ENCODE measurements at regions of chr5 and their contacts with region 1.

Region 1: GRCh38 chr5:88729084-88729828 is 153.7 kb downstream of the MEF2C start:
- H3K4me3 ChIP-seq: no peak overlapping the region
- H3K27ac ChIP-seq: no peak overlapping the region
- H3K4me1 ChIP-seq: no peaks in the 10 kb centered on the region
- CTCF ChIP-seq: peak; percentile 43; the same call in 1 of the 2 replicates

Region 2: GRCh38 chr5:87780831-87781760 is 948.2 kb before region 1 on chr5:
- CTCF ChIA-PET with region 1: interaction called, 17 read pairs
- POLR2A ChIA-PET with region 1: no interaction called
- H3K4me3 ChIP-seq: no peak overlapping the region
- H3K27ac ChIP-seq: no peak overlapping the region
- H3K4me1 ChIP-seq: no peaks in the 10 kb centered on the region
- CTCF ChIP-seq: peak; percentile 78

Region 3: DNA sequence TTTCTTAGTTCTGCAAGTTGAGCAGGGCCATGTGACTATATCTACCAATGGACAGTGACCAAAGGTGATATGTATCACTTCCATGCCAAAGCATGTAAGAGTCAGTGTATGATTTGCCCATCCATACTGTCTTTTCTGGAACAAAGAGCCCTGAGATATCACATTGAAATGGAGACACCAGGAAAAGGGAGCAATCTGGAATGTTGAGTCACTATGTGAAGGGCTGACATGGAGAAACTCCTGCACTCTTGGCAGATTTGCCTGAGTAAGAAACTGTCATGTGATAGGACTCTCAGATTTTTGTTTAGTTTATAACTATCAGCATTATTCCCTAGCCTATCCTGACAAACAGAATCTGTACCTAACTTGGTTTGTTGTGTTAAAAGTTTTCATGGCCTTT is 430.8 kb before region 1 on chr5:
- CTCF ChIA-PET with region 1: no interaction called
- POLR2A ChIA-PET with region 1: no interaction called
- H3K4me3 ChIP-seq: no peak overlapping the region
- H3K27ac ChIP-seq: no peak overlapping the region
- H3K4me1 ChIP-seq: no peaks in the 10 kb centered on the region
- CTCF ChIP-seq: no peak

Region 4: GRCh38 chr5:88741964-88742363 is 12.7 kb after region 1 on chr5:
- CTCF ChIA-PET with region 1: interaction called, 35 read pairs
- POLR2A ChIA-PET with region 1: no interaction called
- H3K4me3 ChIP-seq: no peak overlapping the region
- H3K27ac ChIP-seq: no peak overlapping the region
- H3K4me1 ChIP-seq: peaks cover 8% of the 10 kb centered on the region; the same call in 1 of the 2 replicates
- CTCF ChIP-seq: no peak

Region 5: GRCh38 chr5:88819301-88819999 is 90.2 kb after region 1 on chr5:
- CTCF ChIA-PET with region 1: interaction called, 18 read pairs
- POLR2A ChIA-PET with region 1: no interaction called
- H3K4me3 ChIP-seq: no peak overlapping the region
- H3K27ac ChIP-seq: no peak overlapping the region
- H3K4me1 ChIP-seq: peaks cover 4% of the 10 kb centered on the region
- CTCF ChIP-seq: no peak

Region 6: DNA sequence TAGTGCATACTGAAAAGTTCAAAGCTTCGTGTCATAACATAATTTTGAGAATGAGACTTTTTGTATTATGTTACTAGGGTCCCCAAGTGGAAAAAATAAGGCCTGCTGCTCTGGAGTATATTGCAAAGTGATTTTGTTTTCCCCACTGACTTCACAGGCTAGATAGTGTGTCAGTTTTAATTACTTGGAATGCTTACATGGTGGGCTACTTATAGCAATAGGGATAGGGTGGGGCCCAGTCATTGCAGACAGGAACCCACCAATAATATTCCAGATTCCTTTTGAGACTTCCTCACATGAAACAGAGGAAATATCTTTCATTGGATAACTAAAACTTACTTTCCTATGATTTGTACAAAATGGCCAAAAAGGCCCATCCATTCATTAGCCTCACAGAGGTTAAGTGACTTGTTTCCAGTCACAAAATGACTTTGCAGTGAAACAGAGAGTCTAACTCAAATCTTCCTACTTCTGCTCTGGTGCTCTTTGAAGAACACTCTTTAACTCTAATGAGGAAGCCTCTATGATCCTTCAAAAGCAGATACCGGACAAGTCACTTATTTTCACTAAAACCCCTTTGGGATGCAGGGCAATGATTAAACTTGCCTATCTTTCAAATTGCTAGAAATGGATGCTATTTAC is 170.0 kb after region 1 on chr5:
- CTCF ChIA-PET with region 1: no interaction called
- POLR2A ChIA-PET with region 1: no interaction called
- H3K4me3 ChIP-seq: no peak overlapping the region
- H3K27ac ChIP-seq: no peak overlapping the region
- H3K4me1 ChIP-seq: no peaks in the 10 kb centered on the region
- CTCF ChIP-seq: no peak

Region 7: GRCh38 chr5:89729623-89730301 is 1000.5 kb after region 1 on chr5:
- CTCF ChIA-PET with region 1: interaction called, 18 read pairs
- POLR2A ChIA-PET with region 1: no interaction called
- H3K4me3 ChIP-seq: no peak overlapping the region
- H3K27ac ChIP-seq: no peak overlapping the region
- H3K4me1 ChIP-seq: no peaks in the 10 kb centered on the region
- CTCF ChIP-seq: no peak

Region 8: DNA sequence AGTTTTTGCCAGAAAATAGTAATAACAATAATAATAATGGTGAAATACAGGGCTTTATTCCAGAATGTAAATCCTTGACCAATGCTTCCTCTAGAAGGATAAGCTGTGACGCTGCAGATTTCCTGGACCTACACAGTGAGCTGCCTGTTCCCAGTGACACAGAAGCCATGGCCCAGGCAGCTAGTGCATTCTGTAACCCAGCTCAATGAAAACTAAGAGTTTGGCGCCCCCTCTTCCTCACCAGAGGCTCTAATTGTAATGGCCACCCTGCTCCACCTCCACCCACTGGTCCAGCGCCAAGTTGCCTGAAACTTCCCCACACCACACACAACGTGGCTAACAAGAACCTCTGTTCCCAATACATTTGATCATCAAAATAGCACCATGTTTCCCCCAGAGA is 1432.2 kb after region 1 on chr5:
- CTCF ChIA-PET with region 1: interaction called, 14 read pairs
- POLR2A ChIA-PET with region 1: no interaction called
- H3K4me3 ChIP-seq: no peak overlapping the region
- H3K27ac ChIP-seq: no peak overlapping the region
- H3K4me1 ChIP-seq: no peaks in the 10 kb centered on the region
- CTCF ChIP-seq: no peak

Region 9: GRCh38 chr5:90264689-90265544 is 1535.7 kb after region 1 on chr5:
- CTCF ChIA-PET with region 1: interaction called, 49 read pairs
- POLR2A ChIA-PET with region 1: no interaction called
- H3K4me3 ChIP-seq: no peak overlapping the region
- H3K27ac ChIP-seq: no peak overlapping the region
- H3K4me1 ChIP-seq: no peaks in the 10 kb centered on the region
- CTCF ChIP-seq: peak; percentile 55; the same call in 1 of the 2 replicates

Measured in HEK293 (cell line).